HEK293 (cell line): ENCODE measurements at regions of chr10 and their contacts with region 1.

Region 1: DNA sequence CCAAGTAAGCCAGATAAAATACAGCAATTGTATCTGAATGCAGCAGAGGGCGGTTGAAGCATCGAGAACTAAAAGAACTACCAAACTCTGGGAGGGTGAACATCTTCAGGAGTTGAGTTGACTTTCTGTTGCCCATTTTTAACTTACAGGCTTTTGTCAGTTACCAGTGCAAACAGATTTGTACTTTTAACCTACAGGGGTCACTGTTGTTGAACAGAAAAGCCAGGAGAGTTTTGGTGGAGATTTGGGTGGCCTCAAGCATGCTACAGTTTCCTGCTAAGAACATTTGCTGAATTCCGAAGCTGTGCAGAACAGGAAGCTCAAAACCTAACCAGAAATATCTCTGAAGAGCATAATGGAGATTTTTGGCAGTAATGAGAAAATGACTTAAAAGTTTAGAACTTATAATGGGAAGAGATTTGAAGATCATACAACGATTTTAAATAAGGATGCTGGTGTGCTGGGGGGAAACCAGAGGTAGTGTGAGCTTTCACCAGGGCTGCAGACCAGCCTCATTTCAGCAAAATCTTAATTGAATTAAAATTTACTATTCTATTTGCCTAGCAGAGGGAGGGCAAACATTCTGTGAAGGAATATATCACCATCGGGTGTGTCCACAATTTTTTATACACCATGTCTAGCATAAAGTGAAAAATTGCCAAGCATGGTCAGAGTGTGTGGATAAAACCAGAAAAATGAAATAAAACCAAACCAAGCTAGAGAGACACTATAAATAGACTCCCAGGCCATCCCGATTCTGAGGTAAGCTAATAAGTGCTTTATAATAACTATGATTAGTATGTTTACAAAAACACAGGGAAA is 208.6 kb upstream of the CCDC6 start:
- H3K4me3 ChIP-seq: no peak overlapping the region
- H3K27ac ChIP-seq: no peak overlapping the region
- H3K4me1 ChIP-seq: no peaks in the 10 kb centered on the region
- CTCF ChIP-seq: peak; percentile 47; the same call in 1 of the 2 replicates

Region 2: GRCh38 chr10:59595593-59595992 is 519.4 kb before region 1 on chr10:
- CTCF ChIA-PET with region 1: no interaction called
- POLR2A ChIA-PET with region 1: no interaction called
- H3K4me3 ChIP-seq: no peak overlapping the region
- H3K27ac ChIP-seq: no peak overlapping the region
- H3K4me1 ChIP-seq: no peaks in the 10 kb centered on the region
- CTCF ChIP-seq: no peak

Region 3: DNA sequence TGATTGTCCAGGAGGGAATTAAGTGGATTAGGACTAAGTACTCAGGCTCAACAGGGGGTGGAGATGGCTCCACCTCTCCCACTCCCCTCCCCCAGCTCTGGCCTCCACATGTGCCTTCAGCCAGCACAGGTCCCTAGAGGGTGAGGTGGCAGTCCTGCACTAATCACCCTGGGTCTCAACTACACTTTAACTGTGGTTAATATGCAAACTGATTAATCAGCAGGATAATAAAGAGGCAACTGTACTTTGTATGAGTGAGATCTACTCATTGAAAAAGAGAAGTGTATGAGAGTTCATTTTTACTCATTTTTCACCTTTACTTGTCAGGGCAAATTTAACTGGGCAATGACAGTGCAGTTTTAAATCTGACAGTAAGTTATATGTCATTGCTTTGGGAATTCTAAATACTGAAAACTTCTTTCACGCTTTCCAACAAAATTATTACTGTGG is 15.2 kb after region 1 on chr10:
- CTCF ChIA-PET with region 1: interaction called, 24 read pairs
- POLR2A ChIA-PET with region 1: no interaction called
- H3K4me3 ChIP-seq: no peak overlapping the region
- H3K27ac ChIP-seq: no peak overlapping the region
- H3K4me1 ChIP-seq: peaks cover 3% of the 10 kb centered on the region; the same call in 1 of the 2 replicates
- CTCF ChIP-seq: no peak

Region 4: GRCh38 chr10:60252688-60253087 is 137.7 kb after region 1 on chr10:
- CTCF ChIA-PET with region 1: no interaction called
- POLR2A ChIA-PET with region 1: no interaction called
- H3K4me3 ChIP-seq: no peak overlapping the region
- H3K27ac ChIP-seq: no peak overlapping the region
- H3K4me1 ChIP-seq: no peaks in the 10 kb centered on the region
- CTCF ChIP-seq: no peak